Psoas muscle (tissue), 8 donors: ENCODE measurements at regions of chr1 and their contacts with region 1.

Region 1: GRCh38 chr1:34786521-34787325 is 5.7 kb downstream of the GJB3 start:
- DNase-seq: peak; percentile 44 to 67
- ATAC-seq: peak; percentile 74 to 89 (median 78)
- H3K4me3 ChIP-seq: no peak overlapping the region
- H3K27ac ChIP-seq: no peak overlapping the region
- H3K4me1 ChIP-seq: peaks cover 7% of the 10 kb centered on the region
- H3K27me3 ChIP-seq: peaks cover 0 to 17% (median 9%) of the 10 kb centered on the region in 3 donors
- CTCF ChIP-seq: peak; percentile 83

Region 2: DNA sequence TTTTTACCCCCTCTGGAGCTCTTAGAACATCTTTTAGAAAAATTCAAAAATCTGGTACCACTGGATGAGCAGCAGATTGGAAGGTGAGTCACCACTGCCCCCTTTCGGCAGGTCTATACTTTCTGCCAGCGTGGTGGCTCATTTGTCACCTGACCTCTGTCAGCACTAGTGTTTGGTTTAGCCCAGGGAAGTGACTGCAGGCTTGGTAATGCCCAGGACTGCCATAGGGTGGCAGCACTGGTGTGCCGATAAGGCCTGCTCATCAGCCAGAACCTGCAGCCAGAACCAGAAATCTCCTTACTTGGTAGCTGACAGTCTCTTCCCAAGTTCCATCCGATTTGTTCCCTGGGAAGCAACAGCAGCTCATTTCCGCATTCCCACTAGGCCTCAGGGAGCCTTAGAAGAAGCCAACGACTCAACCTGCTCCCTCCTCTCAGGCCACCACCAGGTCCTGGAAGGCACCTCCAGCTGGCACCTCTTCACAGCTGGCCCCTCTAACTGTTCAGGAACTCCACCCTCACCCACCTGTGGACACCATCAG is 66.0 kb after region 1 on chr1:
- intact Hi-C with region 1: loop called (anchors 2 to 5 kb)
- DNase-seq: peak; percentile 84 to 89
- ATAC-seq: peak; percentile 86 to 98 (median 96)
- H3K4me3 ChIP-seq: no peak overlapping the region
- H3K27ac ChIP-seq: peak overlapping the region; percentile 59
- H3K4me1 ChIP-seq: peaks cover 20% of the 10 kb centered on the region
- H3K27me3 ChIP-seq: no peaks in the 10 kb centered on the region
- CTCF ChIP-seq: peak; percentile 74

Region 3: DNA sequence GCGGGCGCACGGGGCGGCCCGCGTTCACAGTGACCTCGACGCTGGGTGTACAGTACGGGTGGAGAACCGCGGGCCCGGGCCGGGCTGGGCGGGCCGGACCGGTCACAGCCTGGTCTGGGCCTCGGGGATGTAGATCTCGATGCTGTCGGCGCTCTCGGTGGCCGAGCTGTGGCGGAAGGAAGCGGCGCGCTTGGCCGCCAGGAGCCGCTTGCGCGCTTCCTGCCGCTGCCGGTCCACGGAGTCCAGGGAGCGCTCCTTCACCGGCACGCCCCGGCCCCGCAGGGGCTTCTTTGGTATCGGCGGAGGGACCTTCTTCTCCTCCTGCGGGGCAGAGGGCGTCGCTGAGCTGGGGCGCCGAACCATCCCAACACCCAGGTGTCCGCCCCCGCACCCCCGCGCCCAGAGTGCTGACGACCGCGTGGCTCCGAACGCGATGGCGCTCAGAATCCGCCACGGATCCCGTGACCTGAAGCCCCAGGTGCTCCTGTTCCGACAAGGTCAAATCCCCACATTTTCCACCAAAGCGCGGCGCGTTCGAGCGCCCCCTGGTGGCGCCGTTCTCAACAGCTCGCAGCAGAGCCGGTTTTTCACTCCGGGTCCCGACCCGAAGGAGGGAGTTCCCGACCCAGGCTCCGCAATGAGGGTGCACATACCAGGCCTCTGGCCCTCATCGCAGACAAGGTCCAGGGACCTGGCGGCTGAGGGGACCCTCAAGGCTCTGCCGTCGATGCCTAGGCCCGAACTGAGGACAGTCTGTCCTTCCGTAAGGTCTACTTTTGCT is 79.4 kb after region 1 on chr1:
- intact Hi-C with region 1: loop called (anchors 1 to 5 kb)
- DNase-seq: peak; percentile 87 to 91
- ATAC-seq: peak; percentile 75 to 94 (median 78)
- H3K4me3 ChIP-seq: peak overlapping the region; percentile 81
- H3K27ac ChIP-seq: peak overlapping the region; percentile 60
- H3K4me1 ChIP-seq: peaks cover 4% of the 10 kb centered on the region
- H3K27me3 ChIP-seq: no peaks in the 10 kb centered on the region
- CTCF ChIP-seq: peak; percentile 98